ENCODE measurements at regions of chr14 and their contacts with region 1.

Region 1: DNA sequence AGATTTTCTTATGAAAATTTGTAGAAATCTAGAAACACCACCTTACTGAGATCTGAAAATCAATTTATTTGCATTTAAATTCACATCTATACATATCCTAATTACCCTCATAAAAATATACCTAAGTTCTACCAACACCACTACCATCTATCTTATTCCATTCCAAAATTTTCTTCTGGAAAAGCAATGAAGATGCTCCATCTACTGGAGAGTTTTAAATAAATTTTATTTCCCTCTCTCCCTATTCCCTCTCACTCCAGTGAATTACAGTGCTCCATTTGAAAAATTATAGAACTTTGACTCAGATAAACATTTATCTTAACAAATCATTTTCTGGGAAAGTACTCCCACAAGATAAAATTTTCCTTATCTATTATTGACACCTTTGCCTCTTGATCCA is 2.3 kb upstream of the C14orf39 start:
- DNase-seq: no peak
- H3K4me3 Mint-ChIP-seq: no peak overlapping the region
- H3K27ac Mint-ChIP-seq: no peak overlapping the region
- H3K4me1 Mint-ChIP-seq: no peaks in the 10 kb centered on the region
- H3K27me3 Mint-ChIP-seq: no peaks in the 10 kb centered on the region
- CTCF ChIP-seq: no peak

Region 2: DNA sequence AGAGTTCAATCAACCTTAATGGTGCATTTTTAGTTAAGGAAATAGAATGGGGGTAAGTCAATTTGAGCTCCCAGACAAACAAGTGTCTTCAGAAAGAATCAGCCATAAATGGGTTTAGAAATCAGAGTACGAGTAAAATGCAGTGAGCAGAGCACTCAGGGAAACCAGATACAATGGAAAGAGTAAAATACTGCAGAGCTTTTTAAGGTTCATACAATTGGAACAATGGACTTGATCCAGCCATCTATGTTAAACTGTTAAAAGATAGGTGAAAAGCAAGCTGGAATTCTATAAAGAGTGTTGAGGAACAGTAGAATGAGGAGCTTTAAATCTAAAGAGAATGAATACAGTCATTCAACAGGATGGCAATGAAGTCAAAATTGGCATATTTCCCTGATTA is 420.3 kb before region 1 on chr14:
- CTCF ChIA-PET with region 1: no interaction called
- intact Hi-C with region 1: no loop called
- DNase-seq: no peak
- H3K4me3 Mint-ChIP-seq: no peak overlapping the region
- H3K27ac Mint-ChIP-seq: no peak overlapping the region
- H3K4me1 Mint-ChIP-seq: no peaks in the 10 kb centered on the region
- H3K27me3 Mint-ChIP-seq: no peaks in the 10 kb centered on the region
- CTCF ChIP-seq: no peak

Region 3: GRCh38 chr14:60349663-60350365 is 138.4 kb before region 1 on chr14:
- CTCF ChIA-PET with region 1: no interaction called
- intact Hi-C with region 1: loop called (anchors 1 kb)
- DNase-seq: peak; percentile 31
- H3K4me3 Mint-ChIP-seq: no peak overlapping the region
- H3K27ac Mint-ChIP-seq: no peak overlapping the region
- H3K4me1 Mint-ChIP-seq: no peaks in the 10 kb centered on the region
- H3K27me3 Mint-ChIP-seq: no peaks in the 10 kb centered on the region
- CTCF ChIP-seq: peak; percentile 65

Region 4: DNA sequence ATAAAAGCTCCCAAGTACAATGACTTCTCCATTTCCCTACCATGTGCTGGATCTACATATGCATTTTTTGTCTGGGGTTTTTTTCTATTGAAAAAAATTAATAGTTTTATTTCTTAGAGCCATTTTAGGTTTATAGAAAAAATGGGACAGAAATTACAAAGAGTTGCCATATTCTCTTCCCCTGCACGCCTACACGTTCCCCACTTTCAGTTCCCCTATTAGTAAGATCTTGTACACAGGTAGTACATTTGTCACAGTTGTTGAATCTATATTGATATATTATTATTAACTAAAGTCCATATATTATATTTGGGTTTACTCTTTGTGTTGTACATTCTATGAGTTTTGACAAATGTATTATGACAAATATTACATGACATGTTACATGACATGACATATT is 56.5 kb after region 1 on chr14:
- CTCF ChIA-PET with region 1: no interaction called
- intact Hi-C with region 1: no loop called
- DNase-seq: no peak
- H3K4me3 Mint-ChIP-seq: no peak overlapping the region
- H3K27ac Mint-ChIP-seq: no peak overlapping the region
- H3K4me1 Mint-ChIP-seq: no peaks in the 10 kb centered on the region
- H3K27me3 Mint-ChIP-seq: peaks cover 34% of the 10 kb centered on the region
- CTCF ChIP-seq: no peak

Measured in Calu3 (cell line).